Kidney (tissue), 22 donors: ENCODE measurements at regions of chr1 and their contacts with region 1.

Region 1: DNA sequence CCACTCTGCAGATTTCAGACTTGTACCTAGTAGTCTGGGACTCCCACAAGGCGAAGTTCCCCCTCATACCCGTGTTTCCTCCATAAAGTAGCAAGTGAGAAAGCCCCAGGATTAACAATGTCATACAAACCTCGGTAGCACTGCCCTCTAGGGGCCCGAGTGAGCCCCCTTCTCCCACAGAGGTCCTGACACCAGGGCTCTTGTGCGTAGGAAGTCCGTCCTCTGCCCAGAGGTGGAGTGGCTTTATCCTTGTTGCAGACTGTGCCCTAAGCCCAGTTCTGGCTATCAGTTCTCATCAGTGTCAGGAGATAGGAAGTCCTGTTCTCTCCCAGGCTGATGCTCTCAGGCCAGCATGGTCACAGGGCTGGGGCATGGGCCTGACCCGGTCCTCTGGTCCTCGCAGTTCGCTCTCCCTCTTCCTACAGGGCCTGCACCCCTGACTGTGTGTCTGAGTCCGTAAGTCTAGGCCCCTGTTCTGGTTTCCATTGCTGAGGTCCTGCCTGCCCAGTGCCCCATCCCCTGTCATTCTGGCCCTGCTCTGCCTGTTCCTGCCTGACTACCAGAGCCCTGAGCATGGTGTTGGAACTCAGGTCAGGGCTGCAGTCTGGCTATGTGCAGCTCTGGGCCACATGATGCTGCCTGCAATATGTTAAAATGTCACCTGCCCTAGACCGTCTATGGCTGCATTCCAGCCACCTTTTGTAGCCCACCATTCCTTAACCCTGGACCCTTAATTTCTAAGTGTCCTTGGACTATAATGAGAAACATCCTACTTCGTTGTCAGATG is 285.6 kb downstream of the ASTN1 start:
- DNase-seq: no peak
- H3K4me3 ChIP-seq: no peak overlapping the region
- H3K27ac ChIP-seq: no peak overlapping the region
- H3K4me1 ChIP-seq: no peaks in the 10 kb centered on the region
- H3K27me3 ChIP-seq: no peaks in the 10 kb centered on the region
- CTCF ChIP-seq: no peak

Region 2: DNA sequence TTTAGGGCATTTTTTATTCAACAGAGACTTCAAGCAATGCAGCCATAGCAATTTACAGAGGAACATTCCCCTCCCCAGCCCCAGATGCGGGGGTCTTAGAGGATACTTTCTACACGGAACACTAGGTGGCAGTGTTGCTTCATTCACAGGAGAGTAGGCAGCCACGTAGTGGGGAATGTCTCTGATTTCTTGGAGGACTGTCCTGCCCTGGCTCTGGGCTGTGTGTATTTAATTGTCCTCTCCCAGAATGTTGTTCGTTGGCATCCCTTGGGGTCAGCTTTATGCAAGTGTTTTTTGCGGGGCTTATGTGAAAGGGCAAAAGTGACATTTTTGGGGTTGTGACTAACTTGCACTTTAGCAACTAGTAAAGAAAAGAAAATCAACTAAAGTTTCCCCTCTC is 319.1 kb before region 1 on chr1:
- intact Hi-C with region 1: loop called (anchors 10 kb)
- DNase-seq: peak; percentile 44 to 94 (median 80)
- H3K4me3 ChIP-seq: no peak overlapping the region
- H3K27ac ChIP-seq: no peak overlapping the region
- H3K4me1 ChIP-seq: no peaks in the 10 kb centered on the region
- H3K27me3 ChIP-seq: no peaks in the 10 kb centered on the region
- CTCF ChIP-seq: peak; percentile 79

Region 3: DNA sequence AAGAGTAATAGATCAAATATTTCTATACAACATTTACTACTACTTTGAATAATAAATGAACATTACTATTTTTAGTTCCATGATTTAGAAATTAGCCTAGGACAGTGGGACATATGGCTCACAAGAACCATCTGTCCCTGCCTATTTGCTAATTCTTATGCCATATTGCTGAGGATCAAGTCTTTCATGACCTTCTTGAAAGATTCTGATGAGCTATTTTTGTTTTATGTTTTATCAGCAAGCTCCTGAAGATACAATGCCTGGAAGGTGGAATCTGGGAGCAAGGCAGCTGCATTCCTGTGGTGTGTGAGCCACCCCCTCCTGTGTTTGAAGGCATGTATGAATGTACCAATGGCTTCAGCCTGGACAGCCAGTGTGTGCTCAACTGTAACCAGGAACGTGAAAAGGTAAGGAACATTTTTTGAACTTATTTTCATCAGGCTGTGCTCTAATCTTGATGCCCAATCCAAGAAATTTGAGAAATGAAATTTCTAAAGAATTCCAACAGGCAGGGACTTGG is 89.3 kb before region 1 on chr1:
- intact Hi-C with region 1: no loop called
- DNase-seq: no peak
- H3K4me3 ChIP-seq: no peak overlapping the region
- H3K27ac ChIP-seq: no peak overlapping the region
- H3K4me1 ChIP-seq: no peaks in the 10 kb centered on the region
- H3K27me3 ChIP-seq: no peaks in the 10 kb centered on the region
- CTCF ChIP-seq: no peak

Region 4: DNA sequence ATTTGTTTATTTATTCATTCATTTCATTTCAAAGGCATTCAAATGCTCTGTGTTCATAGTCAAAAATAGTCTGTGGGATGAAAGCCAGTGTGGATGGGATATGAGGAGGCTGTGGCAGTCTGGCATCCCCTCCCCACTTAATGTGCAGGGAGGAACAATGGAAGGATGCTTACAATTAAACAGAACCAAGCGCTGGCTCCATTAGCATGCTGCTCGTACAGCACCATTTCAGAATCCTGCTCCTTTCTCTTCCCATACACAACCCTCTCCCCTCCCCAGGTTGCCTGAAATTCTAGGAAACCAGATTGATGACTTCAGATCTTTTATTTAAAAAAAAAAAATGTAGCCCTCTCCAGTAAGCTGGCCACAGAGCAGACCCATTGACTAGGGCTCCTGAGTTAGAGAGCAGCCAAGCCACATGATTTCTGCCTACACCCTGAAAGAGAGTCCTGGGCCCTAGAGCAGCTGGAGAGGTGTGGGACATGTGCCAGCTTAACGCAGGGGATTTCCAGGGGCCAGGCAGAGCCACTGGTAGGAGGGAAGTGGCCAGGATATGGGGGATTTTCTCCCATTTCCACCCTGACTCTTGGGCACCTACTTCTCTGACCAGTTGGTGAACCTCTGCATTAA is 80.4 kb after region 1 on chr1:
- intact Hi-C with region 1: no loop called
- DNase-seq: no peak
- H3K4me3 ChIP-seq: no peak overlapping the region
- H3K27ac ChIP-seq: no peak overlapping the region
- H3K4me1 ChIP-seq: no peaks in the 10 kb centered on the region
- H3K27me3 ChIP-seq: no peaks in the 10 kb centered on the region
- CTCF ChIP-seq: no peak